Activated naive CD4-positive, alpha-beta T cell treated with anti-CD3 and anti-CD28 coated beads for 36 hours (primary cell): ENCODE measurements at regions of chr7 and their contacts with region 1.

Region 1: DNA sequence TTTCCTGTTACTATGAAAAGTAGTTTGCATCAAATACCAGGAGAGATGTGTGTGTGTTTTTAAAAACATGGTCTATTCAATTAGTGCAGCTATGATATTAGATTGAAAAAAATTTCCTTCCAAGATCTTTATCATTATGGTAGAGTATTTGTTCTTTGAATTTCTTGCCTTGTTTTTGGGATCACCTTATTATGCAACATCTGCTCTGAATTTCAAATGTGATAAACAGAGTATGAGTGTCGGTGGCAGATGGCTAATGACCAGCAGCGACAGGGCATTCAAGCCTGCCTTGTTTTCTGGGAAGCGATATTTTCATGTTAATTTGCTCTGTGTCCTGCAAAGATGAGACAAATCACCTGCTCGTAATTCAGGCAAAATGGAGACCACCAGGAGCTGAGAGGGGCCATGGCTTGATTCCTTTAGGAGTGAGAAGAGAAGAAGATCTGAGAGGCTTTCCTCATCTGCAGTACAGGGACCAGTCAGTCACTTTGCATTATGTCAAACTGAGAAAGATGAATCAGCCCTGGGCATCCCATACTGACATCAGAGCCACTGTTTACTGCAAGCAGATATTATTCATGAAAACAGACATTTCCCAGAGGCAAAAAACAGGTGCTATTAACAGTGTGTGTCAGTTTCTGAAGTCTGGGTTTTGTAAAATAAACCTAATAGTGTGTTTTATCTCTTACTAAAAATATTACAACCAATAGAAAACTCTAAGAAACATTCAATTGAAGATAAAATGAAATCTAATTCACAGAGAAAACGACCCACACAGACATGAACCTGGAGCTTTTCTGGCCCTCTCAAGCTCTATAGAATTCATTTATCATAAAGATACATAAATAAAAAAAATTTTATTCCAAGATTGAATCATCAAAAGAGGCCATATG is 67.6 kb downstream of the CDK6 start:
- DNase-seq: peak; percentile 76
- H3K4me3 Mint-ChIP-seq: peak overlapping the region; percentile 48
- H3K27ac Mint-ChIP-seq: peak overlapping the region; percentile 92
- H3K4me1 Mint-ChIP-seq: peaks cover 70% of the 10 kb centered on the region
- H3K27me3 Mint-ChIP-seq: no peaks in the 10 kb centered on the region

Region 2: GRCh38 chr7:92633211-92633906 is 135.4 kb before region 1 on chr7:
- CTCF ChIA-PET with region 1: no interaction called
- intact Hi-C with region 1: loop called (anchors 1 kb)
- DNase-seq: peak; percentile 49
- H3K4me3 Mint-ChIP-seq: no peak overlapping the region
- H3K27ac Mint-ChIP-seq: peak overlapping the region; percentile 92
- H3K4me1 Mint-ChIP-seq: peaks cover 84% of the 10 kb centered on the region
- H3K27me3 Mint-ChIP-seq: no peaks in the 10 kb centered on the region

Region 3: DNA sequence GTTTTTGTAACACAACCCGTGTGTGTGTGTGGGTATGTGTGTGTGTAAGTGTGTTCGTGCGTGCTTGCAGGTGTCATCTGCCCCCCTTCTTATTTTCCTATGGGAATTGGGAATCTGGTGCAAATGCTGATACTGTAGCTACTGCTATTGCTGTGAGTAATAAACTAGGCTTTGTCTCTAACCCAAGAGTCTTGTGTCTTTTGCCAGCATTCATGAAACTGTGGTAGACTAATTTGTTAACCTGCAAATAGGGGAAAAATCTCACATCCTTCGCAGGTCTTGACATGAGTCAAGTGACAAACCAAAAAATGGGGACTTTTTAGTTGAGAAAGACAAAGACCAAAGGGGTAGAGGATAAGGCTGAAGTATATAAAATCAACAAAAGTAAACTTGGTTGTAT is 120.7 kb before region 1 on chr7:
- CTCF ChIA-PET with region 1: no interaction called
- intact Hi-C with region 1: loop called (anchors 1 kb)
- DNase-seq: no peak
- H3K4me3 Mint-ChIP-seq: no peak overlapping the region
- H3K27ac Mint-ChIP-seq: peak overlapping the region; percentile 88
- H3K4me1 Mint-ChIP-seq: peaks cover 89% of the 10 kb centered on the region
- H3K27me3 Mint-ChIP-seq: no peaks in the 10 kb centered on the region

Region 4: GRCh38 chr7:92708111-92709042 is 60.4 kb before region 1 on chr7:
- CTCF ChIA-PET with region 1: interaction called, 3 read pairs
- intact Hi-C with region 1: loop called (anchors 1 kb)
- DNase-seq: no peak
- H3K4me3 Mint-ChIP-seq: no peak overlapping the region
- H3K27ac Mint-ChIP-seq: peak overlapping the region; percentile 89
- H3K4me1 Mint-ChIP-seq: peaks cover 52% of the 10 kb centered on the region
- H3K27me3 Mint-ChIP-seq: no peaks in the 10 kb centered on the region

Region 5: GRCh38 chr7:92731335-92732063 is 37.2 kb before region 1 on chr7:
- CTCF ChIA-PET with region 1: interaction called, 4 read pairs
- intact Hi-C with region 1: loop called (anchors 1 kb)
- DNase-seq: peak; percentile 66
- H3K4me3 Mint-ChIP-seq: peak overlapping the region; percentile 9
- H3K27ac Mint-ChIP-seq: peak overlapping the region; percentile 95
- H3K4me1 Mint-ChIP-seq: peaks cover 64% of the 10 kb centered on the region
- H3K27me3 Mint-ChIP-seq: no peaks in the 10 kb centered on the region

Region 6: GRCh38 chr7:92797693-92798092 is 28.9 kb after region 1 on chr7:
- CTCF ChIA-PET with region 1: no interaction called
- intact Hi-C with region 1: loop called (anchors 1 kb)
- DNase-seq: peak; percentile 51
- H3K4me3 Mint-ChIP-seq: no peak overlapping the region
- H3K27ac Mint-ChIP-seq: no peak overlapping the region
- H3K4me1 Mint-ChIP-seq: peaks cover 29% of the 10 kb centered on the region
- H3K27me3 Mint-ChIP-seq: no peaks in the 10 kb centered on the region